ENCODE measurements at regions of chr10 and their contacts with region 1.

Region 1: GRCh38 chr10:48714088-48714487 is 29.4 kb downstream of the WDFY4 start:
- DNase-seq: no peak
- CTCF ChIP-seq: no peak

Region 2: GRCh38 chr10:48701139-48701901 is 12.8 kb before region 1 on chr10:
- CTCF ChIA-PET with region 1: interaction called, 17 read pairs
- POLR2A ChIA-PET with region 1: no interaction called
- DNase-seq: no peak
- CTCF ChIP-seq: peak; percentile 48

Region 3: GRCh38 chr10:48934672-48935501 is 220.8 kb after region 1 on chr10:
- CTCF ChIA-PET with region 1: no interaction called
- POLR2A ChIA-PET with region 1: no interaction called
- DNase-seq: no peak
- CTCF ChIP-seq: no peak

Measured in GM10248 (cell line).